Activated CD4-positive, alpha-beta memory T cell treated with anti-CD3 and anti-CD28 coated beads, Interleukin-2, amount 10 ng/mL, durations not matched to agents 7 days and 5 days (primary cell): ENCODE measurements at regions of chr5 and their contacts with region 1.

Region 1: GRCh38 chr5:39547553-39548154 is 122.9 kb upstream of the DAB2 start:
- DNase-seq: no peak
- H3K4me3 Mint-ChIP-seq: no peak overlapping the region
- H3K27ac Mint-ChIP-seq: no peak overlapping the region
- H3K4me1 Mint-ChIP-seq: peaks cover 1% of the 10 kb centered on the region
- H3K27me3 Mint-ChIP-seq: peaks cover 10% of the 10 kb centered on the region

Region 2: GRCh38 chr5:39376293-39376714 is 171.3 kb before region 1 on chr5:
- CTCF ChIA-PET with region 1: interaction called, 52 read pairs
- POLR2A ChIA-PET with region 1: interaction called, 4 read pairs
- DNase-seq: peak; percentile 26
- H3K4me3 Mint-ChIP-seq: no peak overlapping the region
- H3K27ac Mint-ChIP-seq: no peak overlapping the region
- H3K4me1 Mint-ChIP-seq: no peaks in the 10 kb centered on the region
- H3K27me3 Mint-ChIP-seq: peaks cover 5% of the 10 kb centered on the region

Region 3: GRCh38 chr5:39584927-39585326 is 37.3 kb after region 1 on chr5:
- CTCF ChIA-PET with region 1: no interaction called
- POLR2A ChIA-PET with region 1: no interaction called
- DNase-seq: no peak
- H3K4me3 Mint-ChIP-seq: no peak overlapping the region
- H3K27ac Mint-ChIP-seq: no peak overlapping the region
- H3K4me1 Mint-ChIP-seq: peaks cover 2% of the 10 kb centered on the region
- H3K27me3 Mint-ChIP-seq: peaks cover 26% of the 10 kb centered on the region

Region 4: GRCh38 chr5:39671561-39671961 is 123.9 kb after region 1 on chr5:
- CTCF ChIA-PET with region 1: no interaction called
- POLR2A ChIA-PET with region 1: no interaction called
- DNase-seq: no peak
- H3K4me3 Mint-ChIP-seq: no peak overlapping the region
- H3K27ac Mint-ChIP-seq: no peak overlapping the region
- H3K4me1 Mint-ChIP-seq: no peaks in the 10 kb centered on the region
- H3K27me3 Mint-ChIP-seq: peaks cover 10% of the 10 kb centered on the region